Heart left ventricle (tissue), 16 donors: ENCODE measurements at regions of chr5 and their contacts with region 1.

Region 1: GRCh38 chr5:135829681-135830383 is 4.6 kb upstream of the SLC25A48 start:
- DNase-seq: peak in 4 of 5 donors; percentile 25 to 73 (median 48)
- ATAC-seq: peak; percentile 38 to 61 (median 53)
- H3K4me3 ChIP-seq: no peak overlapping the region
- H3K27ac ChIP-seq: no peak overlapping the region
- H3K4me1 ChIP-seq: peaks cover 0 to 10% (median 4%) of the 10 kb centered on the region in 12 donors
- H3K27me3 ChIP-seq: peaks cover 0 to 40% (median 17%) of the 10 kb centered on the region in 9 donors
- CTCF ChIP-seq: peak; percentile 64 to 80 (median 72)
- POLR2A ChIP-seq: no peak

Region 2: GRCh38 chr5:135466178-135467050 is 363.4 kb before region 1 on chr5:
- intact Hi-C with region 1: loop called in 6 of 10 experiments (anchors 2 to 10 kb)
- DNase-seq: peak; percentile 72 to 88 (median 74)
- ATAC-seq: peak; percentile 81 to 97 (median 91)
- H3K4me3 ChIP-seq: peak overlapping the region in 10 of 12 donors; percentile 3 to 46 (median 31)
- H3K27ac ChIP-seq: no peak overlapping the region
- H3K4me1 ChIP-seq: peaks cover 0 to 12% (median 5%) of the 10 kb centered on the region in 12 donors
- H3K27me3 ChIP-seq: peaks cover 4 to 88% (median 34%) of the 10 kb centered on the region in 9 donors
- CTCF ChIP-seq: peak; percentile 71 to 94 (median 84)
- POLR2A ChIP-seq: no peak

Region 3: GRCh38 chr5:135551593-135552447 is 278.0 kb before region 1 on chr5:
- intact Hi-C with region 1: loop called in 1 of 10 experiments (anchors 5 kb)
- DNase-seq: peak in 4 of 5 donors; percentile 38 to 68 (median 62)
- ATAC-seq: peak in 3 of 4 donors; percentile 78 to 90 (median 80)
- H3K4me3 ChIP-seq: no peak overlapping the region
- H3K27ac ChIP-seq: no peak overlapping the region
- H3K4me1 ChIP-seq: no peaks in the 10 kb centered on the region
- H3K27me3 ChIP-seq: peaks cover 0 to 84% (median 34%) of the 10 kb centered on the region in 9 donors
- CTCF ChIP-seq: peak; percentile 79 to 91 (median 85)
- POLR2A ChIP-seq: no peak

Region 4: GRCh38 chr5:135560858-135561257 is 269.0 kb before region 1 on chr5:
- intact Hi-C with region 1: loop called (anchors 1 to 5 kb)
- DNase-seq: peak; percentile 58 to 75 (median 67)
- ATAC-seq: peak; percentile 53 to 92 (median 82)
- H3K4me3 ChIP-seq: no peak overlapping the region
- H3K27ac ChIP-seq: no peak overlapping the region
- H3K4me1 ChIP-seq: peaks cover 0 to 3% (median 0%) of the 10 kb centered on the region in 12 donors
- H3K27me3 ChIP-seq: peaks cover 0 to 43% (median 16%) of the 10 kb centered on the region in 9 donors
- CTCF ChIP-seq: peak; percentile 61 to 84 (median 80)
- POLR2A ChIP-seq: no peak

Region 5: DNA sequence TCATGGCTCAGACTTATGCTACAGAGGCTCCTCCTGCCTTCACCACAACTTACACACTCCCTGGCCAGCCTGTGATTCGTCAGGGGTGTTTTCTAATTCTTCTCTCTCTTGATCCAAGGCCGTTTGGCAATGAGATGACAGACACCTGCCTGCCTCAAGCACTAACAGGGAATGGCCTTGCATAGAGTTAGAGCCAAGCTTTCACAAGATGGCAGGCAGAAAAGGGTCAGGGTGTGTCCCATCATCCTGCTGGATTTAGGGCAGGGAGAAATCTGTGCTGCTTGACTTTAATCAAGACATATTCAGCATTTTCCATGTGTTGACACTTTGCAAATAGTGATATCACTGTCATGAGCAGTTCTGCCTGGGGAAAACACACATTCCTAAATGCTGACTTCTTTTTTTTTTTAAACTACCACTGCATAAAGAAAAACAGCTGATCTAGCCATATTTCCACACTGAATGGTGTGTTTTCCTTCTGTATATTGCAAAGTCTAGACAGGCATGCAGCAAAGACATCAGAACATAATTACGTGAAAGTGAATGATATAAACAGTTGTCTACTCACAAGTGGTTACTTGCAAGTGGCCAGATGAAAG is 90.3 kb before region 1 on chr5:
- intact Hi-C with region 1: loop called in 1 of 10 experiments (anchors 5 kb)
- DNase-seq: no peak
- ATAC-seq: peak in 2 of 4 donors; percentile 48 to 61
- H3K4me3 ChIP-seq: no peak overlapping the region
- H3K27ac ChIP-seq: no peak overlapping the region
- H3K4me1 ChIP-seq: peaks cover 0 to 12% (median 0%) of the 10 kb centered on the region in 12 donors
- H3K27me3 ChIP-seq: no peaks in the 10 kb centered on the region
- CTCF ChIP-seq: no peak
- POLR2A ChIP-seq: no peak